Panc1 (cell line): ENCODE measurements at regions of chr13 and their contacts with region 1.

Region 1: DNA sequence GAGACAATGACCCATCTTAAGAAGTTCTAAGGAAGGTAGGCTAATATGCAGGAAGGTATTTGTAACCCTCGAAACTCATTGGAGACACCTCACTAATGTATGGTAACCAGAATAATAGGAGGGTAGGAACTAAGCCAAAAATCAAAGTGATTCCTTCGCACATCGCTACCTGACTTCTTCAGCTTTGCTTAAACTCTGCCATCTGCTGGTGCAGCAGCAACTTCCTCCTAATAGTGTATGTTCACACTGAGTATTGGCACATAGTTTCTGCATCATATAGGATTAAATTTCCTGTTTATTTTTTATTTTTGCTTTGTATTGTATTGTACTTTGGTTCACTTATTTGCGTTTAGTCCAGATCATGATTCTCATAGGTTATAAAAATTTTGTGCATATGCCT is 676.2 kb downstream of the GPC5 start:
- DNase-seq: no peak
- ATAC-seq: no peak
- H3K4me3 ChIP-seq: no peak overlapping the region
- H3K27ac ChIP-seq: no peak overlapping the region
- H3K4me1 ChIP-seq: no peaks in the 10 kb centered on the region
- H3K27me3 ChIP-seq: no peaks in the 10 kb centered on the region
- CTCF ChIP-seq: peak; percentile 39; the same call in 1 of the 2 replicates

Region 2: GRCh38 chr13:91817250-91817649 is 257.4 kb before region 1 on chr13:
- CTCF ChIA-PET with region 1: interaction called, 3 read pairs
- POLR2A ChIA-PET with region 1: no interaction called
- in situ Hi-C with region 1: no loop called
- intact Hi-C with region 1: loop called (anchors 10 kb)
- DNase-seq: no peak
- ATAC-seq: no peak
- H3K4me3 ChIP-seq: no peak overlapping the region
- H3K27ac ChIP-seq: no peak overlapping the region
- H3K4me1 ChIP-seq: no peaks in the 10 kb centered on the region
- H3K27me3 ChIP-seq: no peaks in the 10 kb centered on the region
- CTCF ChIP-seq: peak; percentile 46; the same call in 1 of the 2 replicates

Region 3: GRCh38 chr13:91946498-91947070 is 128.1 kb before region 1 on chr13:
- CTCF ChIA-PET with region 1: no interaction called
- POLR2A ChIA-PET with region 1: no interaction called
- in situ Hi-C with region 1: no loop called
- intact Hi-C with region 1: loop called (anchors 5 kb)
- DNase-seq: peak; percentile 5
- ATAC-seq: 0 out of 2 replicates have a peak, but pooled peaks have one; percentile 69
- H3K4me3 ChIP-seq: no peak overlapping the region
- H3K27ac ChIP-seq: no peak overlapping the region
- H3K4me1 ChIP-seq: no peaks in the 10 kb centered on the region
- H3K27me3 ChIP-seq: no peaks in the 10 kb centered on the region
- CTCF ChIP-seq: peak; percentile 55